ENCODE measurements at regions of chr1 and their contacts with region 1.

Region 1: GRCh38 chr1:94061513-94062443 is 59.2 kb downstream of the ABCA4 start:
- DNase-seq: peak; percentile 64 to 82
- H3K4me3 ChIP-seq: no peak overlapping the region
- H3K27ac ChIP-seq: no peak overlapping the region
- H3K4me1 ChIP-seq: peaks cover 5 to 22% (median 11%) of the 10 kb centered on the region in 4 donors
- H3K27me3 ChIP-seq: no peaks in the 10 kb centered on the region
- CTCF ChIP-seq: peak; percentile 94

Region 2: DNA sequence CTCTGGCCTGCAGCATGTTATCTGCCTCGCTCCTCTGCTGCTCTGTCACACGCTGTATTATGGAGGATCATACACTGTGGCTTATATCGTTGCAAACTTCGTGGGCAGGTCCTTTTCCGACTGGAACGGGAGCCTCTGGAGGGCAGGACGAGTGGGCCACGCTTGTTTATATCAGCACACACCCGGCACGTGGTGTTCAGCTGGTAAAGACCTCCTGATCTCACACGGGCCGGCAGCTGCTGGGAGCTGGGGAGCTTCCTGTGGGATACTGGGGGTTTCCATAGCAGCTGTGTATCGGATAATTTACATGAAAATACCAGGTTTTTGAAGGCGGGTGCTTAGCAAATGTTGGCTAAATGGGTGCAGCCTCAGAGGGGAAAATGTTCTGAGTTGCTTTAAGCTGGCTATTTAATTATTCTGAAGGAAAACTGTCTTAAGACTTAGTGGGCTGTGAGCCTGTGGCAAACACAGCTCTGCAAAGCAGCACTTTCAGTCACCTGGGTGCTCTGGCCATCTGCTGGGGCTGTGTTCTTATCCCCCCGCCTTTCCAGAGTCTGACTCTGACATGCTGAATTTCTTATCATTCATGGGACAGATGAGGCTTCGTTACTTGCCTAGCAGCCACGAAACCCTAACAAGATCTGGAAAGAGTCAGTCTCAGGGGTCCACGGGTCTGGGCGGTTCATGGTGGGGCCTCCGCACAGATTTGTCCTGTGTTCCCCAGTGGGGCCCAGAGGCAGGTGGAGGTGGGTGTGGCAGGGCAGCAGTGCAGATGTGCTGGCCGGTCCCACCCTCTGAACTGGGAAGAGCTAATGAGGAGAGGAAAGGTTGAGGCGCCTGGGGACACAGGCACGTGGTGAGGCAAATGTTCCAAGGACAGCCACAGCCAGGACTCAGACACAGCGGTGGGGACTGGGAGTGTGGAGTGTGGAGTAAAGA is 48.8 kb before region 1 on chr1:
- intact Hi-C with region 1: no loop called
- DNase-seq: no peak
- H3K4me3 ChIP-seq: no peak overlapping the region
- H3K27ac ChIP-seq: no peak overlapping the region
- H3K4me1 ChIP-seq: no peaks in the 10 kb centered on the region
- H3K27me3 ChIP-seq: no peaks in the 10 kb centered on the region
- CTCF ChIP-seq: no peak

Region 3: DNA sequence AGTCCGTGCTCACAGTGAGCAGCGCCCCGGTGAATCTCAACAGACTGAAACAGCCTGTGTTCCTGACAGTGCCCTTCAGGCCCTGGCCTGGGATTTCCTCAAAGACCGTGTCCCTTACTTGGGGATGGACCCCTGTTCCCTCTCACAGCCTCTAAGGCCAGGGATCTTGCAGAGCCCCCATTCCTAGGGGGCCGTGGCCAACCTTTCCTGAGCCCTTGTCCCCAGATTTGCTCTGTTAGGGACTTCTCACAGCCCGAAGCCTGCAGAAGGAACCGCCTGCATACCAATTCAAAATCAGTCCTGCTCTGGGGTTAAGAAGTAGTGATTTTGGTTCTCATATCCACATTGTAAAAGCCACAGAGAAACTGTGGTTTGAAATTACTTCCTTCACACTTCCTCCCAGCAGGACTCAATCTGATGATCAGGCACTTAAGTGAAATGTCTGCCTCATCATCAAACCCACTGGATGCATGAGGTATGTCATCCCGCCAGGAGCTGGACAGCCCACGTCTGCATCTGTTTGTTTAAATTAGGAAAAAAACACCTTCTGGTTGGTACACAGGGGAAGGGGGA is 44.3 kb after region 1 on chr1:
- intact Hi-C with region 1: no loop called
- DNase-seq: no peak
- H3K4me3 ChIP-seq: no peak overlapping the region
- H3K27ac ChIP-seq: no peak overlapping the region
- H3K4me1 ChIP-seq: peaks cover 0 to 18% (median 0%) of the 10 kb centered on the region in 4 donors
- H3K27me3 ChIP-seq: no peaks in the 10 kb centered on the region
- CTCF ChIP-seq: no peak

Region 4: GRCh38 chr1:94237291-94238226 is 175.8 kb after region 1 on chr1 and contains the start of gene ARHGAP29:
- intact Hi-C with region 1: loop called (anchors 5 kb)
- DNase-seq: peak; percentile 64 to 91
- H3K4me3 ChIP-seq: peak within 1 kb of the TSS; percentile 86
- H3K27ac ChIP-seq: peak within 1 kb of the TSS; percentile 94
- H3K4me1 ChIP-seq: peaks cover 0 to 26% (median 10%) of the 10 kb centered on the region in 4 donors
- H3K27me3 ChIP-seq: no peaks in the 10 kb centered on the region
- CTCF ChIP-seq: no peak

Region 5: GRCh38 chr1:94335950-94336349 is 274.2 kb after region 1 on chr1:
- intact Hi-C with region 1: loop called (anchors 1 kb)
- DNase-seq: peak; percentile 77 to 83
- H3K4me3 ChIP-seq: no peak overlapping the region
- H3K27ac ChIP-seq: no peak overlapping the region
- H3K4me1 ChIP-seq: peaks cover 0 to 19% (median 9%) of the 10 kb centered on the region in 4 donors
- H3K27me3 ChIP-seq: no peaks in the 10 kb centered on the region
- CTCF ChIP-seq: peak; percentile 82 to 94